GM12878 (cell line): ENCODE measurements at regions of chr12 and their contacts with region 1.

Region 1: GRCh38 chr12:47837190-47838171 is 17.8 kb upstream of the HDAC7 start:
- DNase-seq: peak; percentile 20
- ATAC-seq: peak; percentile 78
- H3K4me3 ChIP-seq: no peak overlapping the region
- H3K27ac ChIP-seq: no peak overlapping the region
- H3K4me1 ChIP-seq: peaks cover 46% of the 10 kb centered on the region
- H3K27me3 ChIP-seq: no peaks in the 10 kb centered on the region; a peak in 2 of 4 replicates
- CTCF ChIP-seq: peak; percentile 81 to 85 (median 83)
- EP300 ChIP-seq: no peak
- POLR2A ChIP-seq: no peak
- RAD21 ChIP-seq: peak; percentile 93

Region 2: DNA sequence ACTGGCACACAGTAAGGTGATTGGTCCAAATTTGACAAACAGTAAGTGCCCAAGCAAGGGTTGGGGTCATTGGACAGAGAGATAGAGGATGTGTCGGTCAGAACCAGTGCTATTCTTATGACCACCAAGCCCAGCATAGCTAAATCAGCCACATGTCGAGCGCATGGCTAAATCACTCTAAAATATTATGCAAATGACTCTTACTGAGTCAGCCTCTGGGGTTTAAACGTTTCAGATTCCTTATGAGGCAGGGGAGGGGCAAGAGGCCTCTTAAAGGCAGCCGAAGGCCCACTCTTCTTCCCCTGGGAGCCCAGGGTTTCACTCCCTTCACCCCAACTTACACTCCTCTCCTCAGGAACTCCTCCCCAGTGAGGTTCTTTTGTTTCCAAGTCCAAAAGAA is 111.6 kb before region 1 on chr12:
- CTCF ChIA-PET with region 1: interaction called, 12 read pairs
- POLR2A ChIA-PET with region 1: no interaction called
- RAD21 ChIA-PET with region 1: interaction called, 4 read pairs
- SMC1A ChIA-PET with region 1: interaction called, 3 read pairs
- in situ Hi-C with region 1: no loop called
- intact Hi-C with region 1: no loop called
- DNase-seq: no peak
- ATAC-seq: peak; percentile 90
- H3K4me3 ChIP-seq: no peak overlapping the region
- H3K27ac ChIP-seq: no peak overlapping the region
- H3K4me1 ChIP-seq: peaks cover 18% of the 10 kb centered on the region
- H3K27me3 ChIP-seq: no peaks in the 10 kb centered on the region
- CTCF ChIP-seq: no peak
- EP300 ChIP-seq: no peak
- POLR2A ChIP-seq: no peak
- RAD21 ChIP-seq: no peak

Region 3: DNA sequence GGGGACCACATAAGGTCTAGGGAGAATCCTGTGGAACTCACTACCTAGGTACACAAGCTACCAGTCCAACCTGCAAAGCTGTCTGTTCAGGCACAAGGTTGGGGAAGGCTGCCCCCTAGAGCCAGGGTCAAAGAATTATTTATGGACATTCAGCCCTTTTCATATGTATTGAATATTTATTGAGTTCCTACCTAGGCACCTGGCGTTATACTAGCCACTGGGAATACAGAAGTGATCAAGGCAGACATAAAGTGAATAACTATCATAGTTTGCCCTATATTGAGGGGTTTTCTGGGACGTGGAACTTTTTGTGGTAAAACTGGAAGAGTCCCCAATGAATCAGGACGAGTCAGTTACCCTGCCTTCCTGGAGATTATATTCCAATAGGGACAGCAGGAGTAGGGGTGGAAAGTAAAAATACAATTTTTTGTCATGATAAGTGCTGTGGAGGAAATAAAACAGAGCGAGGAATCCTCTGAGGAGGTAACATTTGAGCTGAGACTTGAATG is 70.2 kb before region 1 on chr12:
- CTCF ChIA-PET with region 1: interaction called, 167 read pairs
- POLR2A ChIA-PET with region 1: no interaction called
- RAD21 ChIA-PET with region 1: interaction called, 68 read pairs
- SMC1A ChIA-PET with region 1: interaction called, 31 read pairs
- in situ Hi-C with region 1: no loop called
- intact Hi-C with region 1: no loop called
- DNase-seq: no peak
- ATAC-seq: peak; percentile 89
- H3K4me3 ChIP-seq: no peak overlapping the region
- H3K27ac ChIP-seq: no peak overlapping the region
- H3K4me1 ChIP-seq: no peaks in the 10 kb centered on the region
- H3K27me3 ChIP-seq: no peaks in the 10 kb centered on the region
- CTCF ChIP-seq: peak; percentile 68 to 87 (median 73)
- EP300 ChIP-seq: no peak
- POLR2A ChIP-seq: no peak
- RAD21 ChIP-seq: peak; percentile 92

Region 4: DNA sequence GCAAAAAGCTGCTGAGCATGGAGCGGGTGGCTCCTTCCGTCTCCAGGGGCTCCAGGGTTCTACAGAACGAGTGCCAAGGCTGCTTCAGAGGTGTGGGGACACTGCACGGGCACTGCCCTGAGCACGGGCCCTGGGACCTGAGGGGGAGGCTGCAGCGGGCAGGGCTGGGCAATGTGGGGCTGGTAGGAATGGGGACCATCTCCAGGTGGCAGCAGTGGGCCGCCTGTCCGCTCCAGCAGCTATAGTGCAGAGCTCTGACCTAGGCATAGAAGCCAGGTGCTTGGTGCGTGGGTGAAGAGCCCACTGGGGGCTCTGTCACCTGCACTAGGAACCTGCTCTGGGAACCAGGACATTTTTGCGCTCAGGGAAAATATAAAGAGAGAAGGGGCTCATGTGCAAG is 40.0 kb before region 1 on chr12:
- CTCF ChIA-PET with region 1: interaction called, 215 read pairs
- POLR2A ChIA-PET with region 1: interaction called, 8 read pairs
- RAD21 ChIA-PET with region 1: interaction called, 166 read pairs
- SMC1A ChIA-PET with region 1: interaction called, 43 read pairs
- in situ Hi-C with region 1: no loop called
- intact Hi-C with region 1: loop called (anchors 1 kb)
- DNase-seq: no peak
- ATAC-seq: peak; percentile 89
- H3K4me3 ChIP-seq: no peak overlapping the region
- H3K27ac ChIP-seq: no peak overlapping the region
- H3K4me1 ChIP-seq: peaks cover 1% of the 10 kb centered on the region
- H3K27me3 ChIP-seq: no peaks in the 10 kb centered on the region; a peak in 1 of 4 replicates
- CTCF ChIP-seq: peak; percentile 63 to 74 (median 65)
- EP300 ChIP-seq: no peak
- POLR2A ChIP-seq: no peak
- RAD21 ChIP-seq: peak; percentile 77

Region 5: DNA sequence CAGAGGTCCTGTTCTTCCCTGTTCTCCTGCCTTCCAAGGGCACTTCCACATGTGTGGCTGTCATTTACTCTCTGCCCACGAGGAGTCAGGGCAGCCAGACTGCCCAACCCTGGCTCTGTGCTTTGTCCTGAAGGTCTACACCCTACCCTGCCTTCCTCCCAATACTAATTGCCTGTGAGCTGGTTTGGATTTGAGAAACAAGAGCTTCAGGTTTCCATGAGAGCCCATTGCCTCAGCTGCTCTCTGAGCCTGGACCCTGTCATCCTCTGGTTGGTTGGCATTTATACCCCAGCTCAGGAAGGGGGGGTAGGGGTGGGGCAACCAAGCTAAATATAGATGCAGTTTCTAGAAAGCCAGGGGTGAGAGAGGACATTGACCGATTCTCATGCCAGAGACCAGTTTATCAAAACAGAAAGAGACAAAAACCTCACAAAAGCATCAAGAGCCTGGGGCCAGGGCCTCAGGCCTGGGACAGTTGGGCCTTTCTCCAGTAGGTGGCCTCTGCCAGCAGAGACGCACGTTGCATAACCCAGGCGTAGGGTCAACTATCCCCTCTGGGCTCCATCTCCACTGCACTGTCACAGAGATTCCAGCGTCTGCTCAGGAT is 32.8 kb after region 1 on chr12:
- CTCF ChIA-PET with region 1: interaction called, 12 read pairs
- POLR2A ChIA-PET with region 1: no interaction called
- RAD21 ChIA-PET with region 1: interaction called, 17 read pairs
- SMC1A ChIA-PET with region 1: interaction called, 4 read pairs
- in situ Hi-C with region 1: no loop called
- intact Hi-C with region 1: no loop called
- DNase-seq: peak; percentile 43
- ATAC-seq: peak; percentile 76
- H3K4me3 ChIP-seq: no peak overlapping the region
- H3K27ac ChIP-seq: 0 out of 2 replicates have a peak overlapping the region, but pooled peaks have one; percentile 4
- H3K4me1 ChIP-seq: peaks cover 31% of the 10 kb centered on the region
- H3K27me3 ChIP-seq: no peaks in the 10 kb centered on the region
- CTCF ChIP-seq: peak; percentile 22 to 62 (median 53); a peak in 5 of 6 replicates
- EP300 ChIP-seq: no peak
- POLR2A ChIP-seq: no peak
- RAD21 ChIP-seq: peak; percentile 51

Region 6: DNA sequence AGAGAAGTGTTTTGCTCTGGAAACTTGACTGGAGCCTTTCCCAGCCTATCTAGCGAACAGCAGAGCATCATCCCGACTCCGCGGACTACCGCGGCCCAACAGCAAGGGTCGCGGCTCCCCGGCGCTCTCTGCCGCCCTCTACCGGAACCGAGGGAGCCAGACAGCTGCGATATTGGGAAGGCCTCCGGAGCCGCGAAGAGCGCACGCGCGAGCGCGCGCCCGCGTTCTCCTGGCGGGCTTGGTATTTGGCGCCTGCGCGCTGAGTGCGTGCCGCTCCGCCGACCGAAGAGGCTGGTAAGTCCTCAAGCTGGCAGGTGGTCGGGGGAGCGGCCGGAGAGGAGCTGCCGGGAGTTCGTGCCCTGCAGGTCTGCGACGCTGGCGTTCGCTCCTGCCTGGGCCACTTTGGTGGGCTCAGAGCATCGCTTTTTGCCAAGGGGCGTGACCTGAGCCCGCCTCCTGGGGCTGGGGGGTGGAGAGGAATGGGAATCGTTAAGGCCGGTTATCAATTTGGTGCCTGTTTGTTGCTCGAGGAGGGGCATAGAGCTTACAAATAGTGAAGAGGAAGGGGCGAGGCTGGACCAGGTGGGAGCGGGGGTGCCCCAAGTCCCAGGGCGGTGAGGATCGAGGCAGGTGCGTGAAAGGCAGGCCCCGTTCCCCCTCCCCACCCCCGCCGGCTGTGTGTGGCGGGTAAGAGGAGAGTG is 126.0 kb after region 1 on chr12 and contains the start of gene TMEM106C:
- CTCF ChIA-PET with region 1: interaction called, 19 read pairs
- POLR2A ChIA-PET with region 1: no interaction called
- RAD21 ChIA-PET with region 1: interaction called, 10 read pairs
- SMC1A ChIA-PET with region 1: interaction called, 4 read pairs
- in situ Hi-C with region 1: no loop called
- intact Hi-C with region 1: no loop called
- DNase-seq: peak; percentile 75
- ATAC-seq: peak; percentile 98
- H3K4me3 ChIP-seq: peak within 1 kb of the TSS; percentile 81
- H3K27ac ChIP-seq: peak within 1 kb of the TSS; percentile 21
- H3K4me1 ChIP-seq: peaks cover 3% of the 10 kb centered on the region
- H3K27me3 ChIP-seq: no peaks in the 10 kb centered on the region; a peak in 2 of 4 replicates
- CTCF ChIP-seq: peak; percentile 98 to 99 (median 99); a peak in 5 of 6 replicates
- EP300 ChIP-seq: no peak
- POLR2A ChIP-seq: peak; percentile 82
- RAD21 ChIP-seq: peak; percentile 68
- polyA plus RNA-seq, gene TMEM106C: 190 to 236 TPM

Region 7: GRCh38 chr12:48329199-48329939 is 491.9 kb after region 1 on chr12:
- CTCF ChIA-PET with region 1: no interaction called
- POLR2A ChIA-PET with region 1: no interaction called
- RAD21 ChIA-PET with region 1: no interaction called
- SMC1A ChIA-PET with region 1: no interaction called
- in situ Hi-C with region 1: no loop called
- intact Hi-C with region 1: no loop called
- DNase-seq: no peak
- ATAC-seq: no peak
- H3K4me3 ChIP-seq: no peak overlapping the region
- H3K27ac ChIP-seq: no peak overlapping the region
- H3K4me1 ChIP-seq: no peaks in the 10 kb centered on the region
- H3K27me3 ChIP-seq: no peaks in the 10 kb centered on the region; a peak in 1 of 4 replicates
- CTCF ChIP-seq: no peak
- EP300 ChIP-seq: no peak
- POLR2A ChIP-seq: no peak
- RAD21 ChIP-seq: no peak